CD8-positive, alpha-beta T cell (primary cell): ENCODE measurements at regions of chr2 and their contacts with region 1.

Region 1: GRCh38 chr2:62306751-62307468 is 111.0 kb downstream of the B3GNT2 start:
- DNase-seq: peak in 6 of 9 experiments; percentile 17 to 85 (median 38)
- ATAC-seq: peak; percentile 14
- H3K4me3 ChIP-seq: no peak overlapping the region
- H3K4me3 Mint-ChIP-seq: peak overlapping the region; percentile 13
- H3K27ac ChIP-seq: peak overlapping the region in 1 of 2 experiments; percentile 73
- H3K27ac Mint-ChIP-seq: peak overlapping the region; percentile 82
- H3K4me1 ChIP-seq: peaks cover 89% of the 10 kb centered on the region
- H3K4me1 Mint-ChIP-seq: peaks cover 93% of the 10 kb centered on the region
- H3K27me3 ChIP-seq: no peaks in the 10 kb centered on the region
- H3K27me3 Mint-ChIP-seq: no peaks in the 10 kb centered on the region
- CTCF ChIP-seq: no peak

Region 2: DNA sequence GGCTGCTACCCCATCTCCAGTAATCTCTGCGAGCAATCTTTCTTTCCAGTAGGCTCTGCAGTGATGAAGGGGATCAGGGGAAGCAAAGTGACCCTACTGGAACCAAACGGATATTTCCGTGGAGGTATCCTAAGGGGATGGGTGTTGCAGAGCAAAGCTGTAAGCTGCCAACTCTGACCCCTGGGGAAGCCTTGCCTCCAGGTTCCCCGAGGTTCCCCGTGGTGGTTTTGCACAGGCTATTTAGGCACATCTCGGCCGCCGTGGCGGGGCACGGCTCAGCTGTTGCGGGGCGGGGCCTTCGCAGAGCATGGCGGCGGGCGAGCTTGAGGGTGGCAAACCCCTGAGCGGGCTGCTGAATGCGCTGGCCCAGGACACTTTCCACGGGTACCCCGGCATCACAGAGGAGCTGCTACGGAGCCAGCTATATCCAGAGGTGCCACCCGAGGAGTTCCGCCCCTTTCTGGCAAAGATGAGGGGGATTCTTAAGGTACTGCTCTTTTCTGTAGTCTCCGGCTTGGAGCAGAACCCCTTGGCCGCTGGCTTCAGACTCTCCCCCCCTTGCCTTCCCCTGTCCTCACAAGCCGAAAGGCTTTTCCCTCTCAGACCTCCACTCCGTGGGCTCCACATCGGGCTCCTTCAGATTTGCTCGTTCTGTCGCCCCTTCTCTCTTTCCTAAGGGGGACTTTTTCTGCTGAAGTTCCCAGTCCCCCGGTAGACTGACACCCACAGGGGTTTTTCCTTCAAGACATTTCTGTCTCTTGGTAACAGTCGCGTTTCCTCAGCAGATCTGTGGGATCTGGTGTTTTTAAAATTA is 401.3 kb before region 1 on chr2 and contains the start of gene COMMD1:
- CTCF ChIA-PET with region 1: no interaction called
- POLR2A ChIA-PET with region 1: no interaction called
- intact Hi-C with region 1: loop called in 1 of 2 experiments (anchors 10 kb)
- DNase-seq: peak; percentile 58 to 89 (median 79)
- ATAC-seq: peak; percentile 99
- H3K4me3 ChIP-seq: peak within 1 kb of the TSS; percentile 63 to 79
- H3K4me3 Mint-ChIP-seq: peak within 1 kb of the TSS; percentile 97
- H3K27ac ChIP-seq: peak within 1 kb of the TSS; percentile 43 to 59
- H3K27ac Mint-ChIP-seq: peak within 1 kb of the TSS; percentile 90
- H3K4me1 ChIP-seq: peaks cover 16% of the 10 kb centered on the region
- H3K4me1 Mint-ChIP-seq: peaks cover 34% of the 10 kb centered on the region
- H3K27me3 ChIP-seq: no peaks in the 10 kb centered on the region
- H3K27me3 Mint-ChIP-seq: no peaks in the 10 kb centered on the region
- CTCF ChIP-seq: no peak
- total RNA-seq, gene COMMD1: 8.8 to 11.2 TPM

Region 3: DNA sequence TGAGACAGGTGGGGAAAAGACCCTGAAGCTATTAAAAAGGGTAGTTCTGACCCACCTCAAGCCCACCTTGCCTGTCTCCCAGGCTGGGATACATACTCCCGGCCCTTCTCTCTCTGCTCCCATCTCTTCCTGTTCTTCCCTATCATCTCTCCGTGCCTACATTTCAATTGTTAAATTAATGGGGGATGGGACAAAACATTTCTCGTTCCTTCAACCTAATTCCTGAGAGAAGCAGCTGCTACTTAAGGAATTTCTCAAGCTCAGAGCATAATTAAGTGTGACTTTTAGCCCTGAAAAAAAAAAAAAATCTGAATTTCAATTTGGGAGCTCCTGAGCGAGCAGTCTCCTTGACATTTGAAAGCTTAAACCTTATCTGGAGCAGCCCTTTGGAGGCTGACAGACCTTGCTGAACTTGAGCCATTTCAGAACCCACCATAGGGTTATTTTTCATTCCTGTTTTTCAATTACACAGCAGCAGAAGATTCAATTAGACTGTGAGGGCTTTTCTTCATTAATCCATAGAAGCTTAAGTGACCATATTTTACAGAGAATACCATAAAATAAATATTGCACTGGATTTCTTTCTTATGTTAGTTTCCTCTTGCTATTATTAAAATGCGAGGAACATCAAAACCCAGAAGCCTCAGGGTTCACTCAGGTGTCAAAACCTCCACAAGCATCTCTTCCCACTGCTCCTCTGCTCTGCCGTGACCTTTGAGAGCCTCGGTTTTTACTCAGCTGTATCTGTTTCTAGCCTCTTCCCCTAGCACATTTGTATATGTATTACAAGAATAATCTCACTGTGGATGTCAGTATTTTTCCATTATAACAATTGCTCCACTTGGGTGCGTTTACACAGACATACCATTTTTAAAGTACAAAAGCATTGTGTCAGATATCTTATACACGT is 14.7 kb after region 1 on chr2:
- CTCF ChIA-PET with region 1: interaction called, 3 read pairs
- POLR2A ChIA-PET with region 1: interaction called, 3 read pairs
- intact Hi-C with region 1: loop called in 1 of 2 experiments (anchors 2 kb)
- DNase-seq: no peak
- ATAC-seq: no peak
- H3K4me3 ChIP-seq: no peak overlapping the region
- H3K4me3 Mint-ChIP-seq: no peak overlapping the region
- H3K27ac ChIP-seq: no peak overlapping the region
- H3K27ac Mint-ChIP-seq: no peak overlapping the region
- H3K4me1 ChIP-seq: peaks cover 5% of the 10 kb centered on the region
- H3K4me1 Mint-ChIP-seq: peaks cover 23% of the 10 kb centered on the region
- H3K27me3 ChIP-seq: no peaks in the 10 kb centered on the region
- H3K27me3 Mint-ChIP-seq: no peaks in the 10 kb centered on the region
- CTCF ChIP-seq: no peak

Region 4: DNA sequence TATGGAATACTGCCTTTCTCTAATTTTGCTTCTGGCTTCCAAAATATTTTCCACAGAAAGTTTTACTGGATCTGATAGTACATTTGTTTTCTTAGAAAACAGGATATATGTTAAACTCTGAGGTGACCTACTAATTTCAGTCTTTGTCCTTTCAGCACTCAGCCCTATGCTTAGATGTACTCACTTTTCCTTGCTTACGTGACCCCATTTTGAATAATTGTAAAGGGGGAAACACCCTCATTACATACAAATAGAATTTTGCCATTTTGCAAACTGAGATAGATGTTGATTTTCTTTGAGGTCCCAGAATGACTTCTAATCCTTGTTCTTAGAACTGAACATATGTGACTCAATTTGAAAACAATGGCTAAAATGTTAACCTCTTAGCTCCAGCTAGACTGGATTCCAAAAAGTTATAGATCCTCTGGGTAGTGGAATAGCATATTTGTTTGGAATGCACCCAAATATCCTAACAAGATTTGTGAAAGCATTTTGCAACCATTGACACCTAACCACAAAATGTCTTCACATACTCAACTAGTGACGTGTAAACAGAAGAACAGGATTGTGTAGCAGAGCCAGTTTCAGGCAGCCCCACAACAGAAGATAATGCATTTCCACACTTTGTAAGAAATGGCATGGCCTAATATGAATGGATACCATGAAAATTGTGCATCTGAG is 353.8 kb after region 1 on chr2:
- CTCF ChIA-PET with region 1: no interaction called
- POLR2A ChIA-PET with region 1: no interaction called
- intact Hi-C with region 1: no loop called
- DNase-seq: no peak
- ATAC-seq: no peak
- H3K4me3 ChIP-seq: no peak overlapping the region
- H3K4me3 Mint-ChIP-seq: no peak overlapping the region
- H3K27ac ChIP-seq: no peak overlapping the region
- H3K27ac Mint-ChIP-seq: no peak overlapping the region
- H3K4me1 ChIP-seq: no peaks in the 10 kb centered on the region
- H3K4me1 Mint-ChIP-seq: no peaks in the 10 kb centered on the region
- H3K27me3 ChIP-seq: no peaks in the 10 kb centered on the region
- H3K27me3 Mint-ChIP-seq: no peaks in the 10 kb centered on the region
- CTCF ChIP-seq: no peak